ENCODE measurements at regions of chr7 and their contacts with region 1.

Region 1: DNA sequence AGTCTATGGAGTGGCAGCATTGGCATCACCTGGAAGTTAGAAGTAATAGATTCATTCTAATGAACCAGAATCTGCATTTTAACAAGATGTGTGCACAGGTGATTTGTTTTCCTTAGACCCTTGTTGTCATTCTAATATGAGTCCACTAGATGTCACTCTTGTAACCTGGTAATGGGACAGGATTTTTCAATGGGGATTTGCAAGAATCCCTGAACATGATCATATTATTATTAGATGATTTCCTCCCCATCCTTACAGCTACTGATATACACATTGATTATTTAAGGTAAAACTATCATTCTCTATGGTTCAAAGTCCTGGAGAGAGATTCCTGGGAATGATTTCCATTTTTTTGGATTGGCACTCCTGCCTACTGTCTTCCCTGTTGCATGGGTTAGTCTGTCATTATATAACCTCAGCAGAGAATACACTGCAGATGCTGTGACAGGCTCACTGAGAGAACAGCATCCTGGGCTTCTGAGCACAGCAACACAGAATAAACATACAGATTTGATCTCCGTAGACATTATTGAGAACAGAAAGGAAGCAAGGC is 194.9 kb downstream of the SUGCT start:
- DNase-seq: no peak
- H3K4me3 Mint-ChIP-seq: no peak overlapping the region
- H3K27ac Mint-ChIP-seq: no peak overlapping the region
- H3K4me1 Mint-ChIP-seq: no peaks in the 10 kb centered on the region
- H3K27me3 Mint-ChIP-seq: no peaks in the 10 kb centered on the region

Region 2: DNA sequence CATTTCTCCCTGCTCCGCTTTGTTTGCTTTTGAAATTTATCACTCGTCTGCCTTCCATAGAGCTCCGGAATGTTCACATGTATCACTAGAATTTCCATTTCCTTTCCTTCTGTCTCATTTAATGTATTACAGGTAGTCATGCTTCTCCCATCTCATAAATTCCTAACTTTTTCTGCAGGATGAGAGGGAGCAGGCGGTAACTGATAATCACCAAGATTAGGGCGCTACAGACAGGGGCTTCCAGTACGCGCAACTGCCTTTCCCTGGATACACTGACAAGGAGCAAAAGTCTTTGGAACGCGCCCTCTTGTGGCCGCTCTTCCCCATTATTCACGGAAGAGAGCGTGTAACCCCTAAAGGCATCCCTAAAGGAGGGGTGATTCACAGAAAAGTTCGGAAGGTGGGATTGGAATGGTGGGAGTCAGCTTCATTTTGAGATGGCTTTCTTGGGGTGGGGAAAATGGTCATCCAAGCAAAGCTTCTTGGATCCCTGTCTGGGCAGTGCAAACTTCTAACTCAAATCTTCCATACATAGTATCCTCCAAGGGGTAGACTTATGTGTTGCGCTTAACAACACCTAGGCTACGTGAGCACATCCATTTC is 1366.7 kb after region 1 on chr7:
- intact Hi-C with region 1: loop called (anchors 1 kb)
- DNase-seq: no peak
- H3K4me3 Mint-ChIP-seq: no peak overlapping the region
- H3K27ac Mint-ChIP-seq: no peak overlapping the region
- H3K4me1 Mint-ChIP-seq: peaks cover 10% of the 10 kb centered on the region
- H3K27me3 Mint-ChIP-seq: peaks cover 45% of the 10 kb centered on the region